Gastrocnemius medialis (tissue), 4 donors: ENCODE measurements at regions of chr17 and their contacts with region 1.

Region 1: DNA sequence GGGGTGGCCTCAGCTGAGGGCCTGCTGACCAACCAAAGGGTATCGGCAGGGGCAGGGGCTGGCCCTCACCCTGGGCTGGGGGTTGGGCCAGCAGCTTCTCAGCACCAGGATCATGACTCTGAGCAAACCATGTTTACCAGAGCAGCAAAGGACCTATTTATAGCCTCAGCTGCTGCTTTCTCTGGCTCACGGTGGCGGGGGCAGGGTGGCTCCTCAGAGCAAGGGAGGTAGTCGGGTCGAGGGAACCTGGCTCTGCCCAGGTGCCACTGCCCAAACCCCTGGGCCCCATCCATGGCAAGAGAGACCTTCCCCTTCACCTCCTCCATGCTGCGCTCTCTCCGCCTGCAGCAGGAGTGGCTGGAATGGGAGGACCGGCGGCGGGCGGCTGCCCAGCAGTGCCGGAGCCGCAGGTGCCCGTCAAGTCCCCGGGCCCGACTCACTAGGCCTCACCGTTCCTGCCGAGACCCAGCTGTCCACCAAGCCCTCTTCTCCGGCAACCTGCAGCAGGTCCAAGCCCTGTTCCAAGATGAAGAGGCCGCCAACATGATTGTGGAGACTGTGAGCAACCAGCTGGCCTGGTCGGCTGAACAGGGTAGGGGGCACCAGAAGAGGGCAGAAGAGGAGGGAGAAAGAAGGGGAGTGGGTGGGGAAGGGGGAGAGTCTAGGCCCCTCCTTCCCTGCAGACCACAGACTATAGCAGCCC is at the start of gene ASB16:
- DNase-seq: peak; percentile 80 to 90
- ATAC-seq: peak; percentile 88 to 91
- H3K4me3 ChIP-seq: peak within 1 kb of the TSS; percentile 60 to 82 (median 66)
- H3K27ac ChIP-seq: peak within 1 kb of the TSS; percentile 96 to 100 (median 99)
- H3K4me1 ChIP-seq: peaks cover 28 to 39% of the 10 kb centered on the region in 2 donors
- H3K27me3 ChIP-seq: no peaks in the 10 kb centered on the region
- CTCF ChIP-seq: peak in 3 of 5 experiments; percentile 15 to 44 (median 31)
- POLR2A ChIP-seq: peak; percentile 89 to 96
- total RNA-seq, gene ASB16: 13.2 to 134 (median 34.2) TPM

Region 2: DNA sequence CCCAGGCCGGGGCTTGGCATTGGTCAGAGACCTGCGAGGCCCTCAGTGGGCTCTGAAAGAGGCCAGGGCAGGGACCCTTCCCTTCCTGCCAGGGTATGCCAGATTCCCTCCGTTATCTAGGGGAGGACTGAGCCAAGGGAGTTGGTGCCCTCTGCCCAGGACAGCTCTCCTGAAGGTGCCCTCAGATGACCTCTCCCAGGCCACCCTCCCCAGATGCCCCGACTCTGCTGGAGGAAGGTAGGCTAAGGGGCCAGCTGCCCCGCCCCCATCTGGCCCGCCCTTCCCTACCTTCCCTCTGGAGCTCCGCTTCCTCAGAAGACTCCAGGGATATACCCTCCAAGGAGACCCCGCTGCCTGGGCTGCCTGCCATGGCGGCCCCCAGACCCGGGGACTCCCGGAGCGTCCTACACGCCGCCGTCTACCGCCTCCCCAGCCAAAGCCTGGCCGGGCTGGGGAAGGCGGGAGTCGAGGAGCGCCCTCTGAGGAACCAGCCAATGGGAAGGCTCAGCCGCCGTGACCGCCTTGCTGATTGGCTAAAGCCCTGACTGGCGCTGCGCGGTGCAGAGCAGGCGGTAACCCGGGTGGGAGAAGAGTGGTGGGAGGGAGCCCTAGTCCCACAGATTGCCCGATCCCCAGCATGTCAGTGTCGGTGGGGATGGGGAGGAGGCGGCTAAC is 270.3 kb before region 1 on chr17:
- in situ Hi-C with region 1: loop called in 1 of 4 experiments (anchors 25 kb)
- intact Hi-C with region 1: no loop called
- DNase-seq: peak; percentile 66 to 67
- ATAC-seq: peak; percentile 92 to 94
- H3K4me3 ChIP-seq: peak overlapping the region; percentile 38 to 66 (median 57)
- H3K27ac ChIP-seq: no peak overlapping the region
- H3K4me1 ChIP-seq: peaks cover 3 to 14% of the 10 kb centered on the region in 2 donors
- H3K27me3 ChIP-seq: peaks cover 18 to 22% (median 21%) of the 10 kb centered on the region in 3 donors
- CTCF ChIP-seq: no peak
- POLR2A ChIP-seq: no peak

Region 3: GRCh38 chr17:44024271-44024663 is 146.4 kb before region 1 on chr17:
- in situ Hi-C with region 1: no loop called
- intact Hi-C with region 1: no loop called
- DNase-seq: no peak
- ATAC-seq: no peak
- H3K4me3 ChIP-seq: no peak overlapping the region
- H3K27ac ChIP-seq: no peak overlapping the region
- H3K4me1 ChIP-seq: peaks cover 1 to 2% of the 10 kb centered on the region in 2 donors
- H3K27me3 ChIP-seq: no peaks in the 10 kb centered on the region
- CTCF ChIP-seq: no peak
- POLR2A ChIP-seq: no peak

Region 4: GRCh38 chr17:44141717-44142285 is 28.8 kb before region 1 on chr17 and contains the start of gene HROB:
- in situ Hi-C with region 1: no loop called
- intact Hi-C with region 1: loop called (anchors 1 kb)
- DNase-seq: peak; percentile 92 to 94
- ATAC-seq: peak; percentile 90
- H3K4me3 ChIP-seq: peak within 1 kb of the TSS; percentile 67 to 87 (median 73)
- H3K27ac ChIP-seq: peak within 1 kb of the TSS; percentile 28 to 64 (median 46)
- H3K4me1 ChIP-seq: peaks cover 26 to 31% of the 10 kb centered on the region in 2 donors
- H3K27me3 ChIP-seq: no peaks in the 10 kb centered on the region
- CTCF ChIP-seq: peak; percentile 85 to 94 (median 89)
- POLR2A ChIP-seq: no peak
- total RNA-seq, gene HROB: 0.97 to 7.4 (median 1.9) TPM

Region 5: DNA sequence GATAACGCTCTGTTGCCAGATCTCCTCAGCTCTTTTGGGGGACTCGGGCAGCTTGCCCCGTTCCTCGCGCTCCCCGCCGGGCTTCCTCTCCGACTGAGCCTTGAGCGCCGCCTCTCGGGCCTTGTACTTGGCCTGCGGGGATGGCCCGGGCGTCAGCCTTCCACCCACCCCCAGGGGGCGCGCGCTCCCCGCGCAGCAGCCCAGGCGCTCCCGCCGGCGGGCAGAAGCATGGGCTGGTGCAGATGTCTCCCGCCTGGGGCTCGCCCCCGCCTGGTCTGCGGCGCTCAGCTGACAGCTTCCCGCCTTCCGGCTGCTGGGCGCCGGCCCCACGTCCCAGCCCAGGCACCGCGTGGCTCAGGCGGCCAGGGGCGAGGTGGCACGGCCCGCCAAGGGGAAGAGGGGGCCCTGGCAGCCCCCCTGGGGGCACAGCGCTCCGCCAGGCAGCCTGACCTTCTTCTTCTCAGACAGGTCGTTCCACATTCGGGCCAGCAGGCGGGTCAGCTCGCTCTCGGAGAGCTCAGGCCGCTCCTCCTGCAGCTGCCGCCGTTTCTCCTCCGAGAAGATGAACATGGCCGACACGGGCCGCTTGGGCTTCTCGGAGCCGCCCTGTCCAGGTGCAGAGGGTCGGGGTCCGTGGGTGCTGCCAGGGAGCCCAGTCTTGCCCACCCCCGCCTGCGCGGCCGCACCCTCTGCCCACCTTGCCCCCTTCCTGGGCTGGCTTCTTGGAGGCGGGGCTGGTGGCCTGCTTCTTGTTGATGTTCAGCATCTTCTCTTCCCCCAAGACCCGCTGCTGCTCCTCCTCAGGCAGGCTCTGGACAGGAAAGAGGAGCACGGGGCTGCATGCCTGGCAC is 39.9 kb after region 1 on chr17:
- in situ Hi-C with region 1: no loop called
- intact Hi-C with region 1: loop called (anchors 5 kb)
- DNase-seq: peak; percentile 64 to 87
- ATAC-seq: peak; percentile 90 to 92
- H3K4me3 ChIP-seq: peak overlapping the region in 1 of 4 donors; percentile 34
- H3K27ac ChIP-seq: peak overlapping the region; percentile 50 to 80 (median 60)
- H3K4me1 ChIP-seq: peaks cover 26 to 39% of the 10 kb centered on the region in 2 donors
- H3K27me3 ChIP-seq: no peaks in the 10 kb centered on the region
- CTCF ChIP-seq: peak; percentile 99 to 100 (median 99)
- POLR2A ChIP-seq: peak in 1 of 2 donors; percentile 25